Spleen (tissue), 13 donors: ENCODE measurements at regions of chr6 and their contacts with region 1.

Region 1: GRCh38 chr6:52304983-52305390 is 20.4 kb upstream of the MCM3 start:
- DNase-seq: no peak
- H3K4me3 ChIP-seq: peak overlapping the region in 2 of 8 donors; percentile 12 to 36
- H3K27ac ChIP-seq: peak overlapping the region; percentile 55 to 90 (median 80)
- H3K4me1 ChIP-seq: peaks cover 46 to 70% (median 56%) of the 10 kb centered on the region in 6 donors
- H3K27me3 ChIP-seq: no peaks in the 10 kb centered on the region
- CTCF ChIP-seq: no peak
- POLR2A ChIP-seq: no peak

Region 2: GRCh38 chr6:52207066-52207465 is 97.9 kb before region 1 on chr6:
- intact Hi-C with region 1: no loop called
- DNase-seq: no peak
- H3K4me3 ChIP-seq: no peak overlapping the region
- H3K27ac ChIP-seq: no peak overlapping the region
- H3K4me1 ChIP-seq: no peaks in the 10 kb centered on the region
- H3K27me3 ChIP-seq: peaks cover 0 to 14% (median 0%) of the 10 kb centered on the region in 7 donors
- CTCF ChIP-seq: no peak
- POLR2A ChIP-seq: no peak

Region 3: GRCh38 chr6:52233975-52234823 is 70.8 kb before region 1 on chr6:
- intact Hi-C with region 1: no loop called
- DNase-seq: no peak
- H3K4me3 ChIP-seq: no peak overlapping the region
- H3K27ac ChIP-seq: no peak overlapping the region
- H3K4me1 ChIP-seq: no peaks in the 10 kb centered on the region
- H3K27me3 ChIP-seq: peaks cover 0 to 38% (median 0%) of the 10 kb centered on the region in 7 donors
- CTCF ChIP-seq: no peak
- POLR2A ChIP-seq: no peak

Region 4: GRCh38 chr6:52361945-52362442 is 57.0 kb after region 1 on chr6 and contains the start of gene PAQR8:
- intact Hi-C with region 1: loop called (anchors 10 kb)
- DNase-seq: peak; percentile 96
- H3K4me3 ChIP-seq: peak within 1 kb of the TSS; percentile 76 to 92 (median 88)
- H3K27ac ChIP-seq: peak within 1 kb of the TSS; percentile 62 to 90 (median 86)
- H3K4me1 ChIP-seq: peaks cover 7 to 41% (median 29%) of the 10 kb centered on the region in 6 donors
- H3K27me3 ChIP-seq: no peaks in the 10 kb centered on the region
- CTCF ChIP-seq: peak in 1 of 11 experiments; percentile 21
- POLR2A ChIP-seq: peak in 1 of 3 donors; percentile 43
- total RNA-seq, gene PAQR8: 8.3 to 13.3 (median 11.3) TPM